ENCODE measurements at regions of chr2 and their contacts with region 1.

Region 1: DNA sequence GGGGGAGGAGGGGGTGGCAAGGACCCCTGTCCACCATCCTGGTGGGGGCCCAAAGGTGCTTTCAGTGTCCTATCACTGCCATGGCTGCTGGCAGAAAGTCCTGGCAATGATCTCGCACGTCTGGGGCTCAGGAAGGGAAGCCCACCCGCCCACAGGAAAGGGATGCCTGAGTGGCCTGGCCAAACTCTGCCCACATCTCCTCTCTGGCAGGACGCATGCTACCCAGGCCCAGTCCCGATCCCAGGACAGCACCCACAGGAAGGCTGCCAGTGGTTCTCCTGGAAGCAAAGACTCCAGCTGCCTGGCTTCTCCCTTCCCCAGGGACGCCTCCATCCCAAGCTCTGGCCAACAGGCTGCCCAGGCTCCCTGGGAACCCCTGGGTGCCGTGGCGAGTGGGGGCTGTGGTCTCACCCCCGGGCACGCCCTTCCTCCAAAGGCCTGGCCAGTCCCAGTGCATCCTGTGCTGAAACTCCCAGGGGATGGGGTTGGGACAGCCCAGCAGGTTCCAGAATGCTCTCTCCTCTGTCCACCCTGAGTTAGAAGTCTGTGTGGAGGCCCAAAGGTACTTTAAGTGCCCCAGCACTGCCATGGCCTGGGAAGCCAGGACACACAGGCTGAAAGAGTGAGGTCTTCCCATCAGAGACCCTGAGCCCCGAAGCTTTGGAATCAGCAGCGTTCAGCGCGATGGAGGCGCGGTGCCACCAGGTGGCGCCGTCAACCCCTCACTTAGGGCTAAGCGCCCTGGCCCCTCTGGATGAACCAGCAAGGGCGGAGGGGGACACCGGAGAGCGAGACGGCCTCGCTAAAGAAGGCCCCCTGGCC is 29.8 kb upstream of the TAF1B start:
- DNase-seq: peak; percentile 84
- ATAC-seq: peak; percentile 90
- H3K4me3 Mint-ChIP-seq: no peak overlapping the region
- H3K27ac Mint-ChIP-seq: no peak overlapping the region
- H3K4me1 Mint-ChIP-seq: peaks cover 9% of the 10 kb centered on the region
- H3K27me3 Mint-ChIP-seq: peaks cover 3% of the 10 kb centered on the region

Region 2: GRCh38 chr2:9799665-9800632 is 13.6 kb before region 1 on chr2:
- CTCF ChIA-PET with region 1: interaction called, 42 read pairs
- POLR2A ChIA-PET with region 1: no interaction called
- intact Hi-C with region 1: no loop called
- DNase-seq: peak; percentile 93
- ATAC-seq: peak; percentile 92
- H3K4me3 Mint-ChIP-seq: peak overlapping the region; percentile 39
- H3K27ac Mint-ChIP-seq: peak overlapping the region; percentile 86
- H3K4me1 Mint-ChIP-seq: peaks cover 24% of the 10 kb centered on the region
- H3K27me3 Mint-ChIP-seq: peaks cover 2% of the 10 kb centered on the region

Region 3: GRCh38 chr2:9914384-9915065 is 101.0 kb after region 1 on chr2:
- CTCF ChIA-PET with region 1: interaction called, 15 read pairs
- POLR2A ChIA-PET with region 1: no interaction called
- intact Hi-C with region 1: loop called (anchors 1 kb)
- DNase-seq: peak; percentile 79
- ATAC-seq: peak; percentile 100
- H3K4me3 Mint-ChIP-seq: no peak overlapping the region
- H3K27ac Mint-ChIP-seq: no peak overlapping the region
- H3K4me1 Mint-ChIP-seq: peaks cover 10% of the 10 kb centered on the region
- H3K27me3 Mint-ChIP-seq: no peaks in the 10 kb centered on the region

Region 4: DNA sequence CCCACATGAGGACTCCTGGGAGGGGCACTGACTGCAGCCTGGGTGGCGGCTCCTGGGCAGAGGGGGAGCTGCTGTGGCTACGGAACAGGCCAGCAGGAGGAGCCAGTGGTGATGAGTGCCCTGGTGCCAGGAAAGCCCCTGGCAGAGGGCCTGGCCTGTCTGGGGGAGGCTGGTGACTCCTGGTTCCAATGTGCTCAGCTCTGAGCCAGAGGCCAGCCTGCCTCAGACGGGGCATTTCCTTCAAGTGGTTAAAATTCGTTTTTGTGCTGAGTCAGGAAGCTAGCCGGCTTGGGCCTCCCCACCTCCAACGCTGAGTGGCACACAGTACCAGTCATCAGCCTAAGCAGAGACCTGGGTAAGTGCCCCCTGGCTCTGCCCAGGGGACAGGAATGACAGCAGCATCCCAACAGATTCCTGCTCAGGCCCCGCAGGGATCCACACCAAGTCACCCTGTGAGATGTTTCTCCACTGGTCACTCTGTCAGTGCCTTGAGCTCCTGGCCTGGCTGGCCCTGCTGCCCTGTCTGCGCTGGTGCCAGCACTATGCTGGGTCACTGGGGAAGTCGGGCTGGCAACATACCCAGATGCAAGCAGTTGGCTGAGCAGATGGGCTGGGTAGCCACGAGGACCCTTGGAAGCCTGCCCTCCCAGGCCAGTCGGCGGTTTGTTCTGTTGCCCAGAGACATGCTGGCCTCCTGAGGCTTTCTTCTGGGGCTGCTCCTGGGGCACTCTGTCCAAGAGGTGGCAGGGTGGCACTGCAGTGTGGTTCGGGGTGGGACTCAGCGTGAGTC is 222.8 kb after region 1 on chr2:
- CTCF ChIA-PET with region 1: interaction called, 12 read pairs
- POLR2A ChIA-PET with region 1: no interaction called
- intact Hi-C with region 1: no loop called
- DNase-seq: peak; percentile 70
- ATAC-seq: peak; percentile 90
- H3K4me3 Mint-ChIP-seq: no peak overlapping the region
- H3K27ac Mint-ChIP-seq: no peak overlapping the region
- H3K4me1 Mint-ChIP-seq: peaks cover 4% of the 10 kb centered on the region
- H3K27me3 Mint-ChIP-seq: no peaks in the 10 kb centered on the region